ENCODE measurements at regions of chr2 and their contacts with region 1.

Region 1: DNA sequence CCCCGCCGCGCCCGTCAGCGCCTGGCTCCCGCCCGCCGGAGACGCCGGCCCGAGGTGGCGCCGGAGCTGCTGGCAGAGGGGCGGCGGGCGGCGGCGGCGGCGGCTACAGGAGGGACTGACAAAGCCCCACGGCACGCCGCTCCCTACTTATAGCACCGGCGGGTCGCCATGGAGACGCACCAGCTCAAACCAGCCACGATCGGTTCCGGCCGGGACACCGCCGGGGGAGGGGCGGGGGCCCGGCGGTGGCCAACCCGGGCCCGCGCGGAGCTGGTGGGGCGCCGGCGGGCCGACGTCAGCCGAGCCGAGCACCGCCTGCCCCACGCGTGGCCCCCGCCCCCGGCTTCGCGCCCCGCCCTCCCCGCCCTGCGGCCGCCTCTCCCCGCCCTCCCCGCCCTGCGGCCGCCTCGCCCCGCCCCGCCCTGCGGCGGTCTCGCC is at the start of gene ODC1:
- DNase-seq: peak; percentile 53
- ATAC-seq: peak; percentile 76
- H3K4me3 ChIP-seq: peak within 1 kb of the TSS; percentile 77
- H3K27ac ChIP-seq: peak within 1 kb of the TSS; percentile 93
- H3K4me1 ChIP-seq: peaks cover 25% of the 10 kb centered on the region
- H3K27me3 ChIP-seq: no peaks in the 10 kb centered on the region
- CTCF ChIP-seq: no peak
- EP300 ChIP-seq: no peak; a peak in 1 of 4 replicates
- POLR2A ChIP-seq: peak; percentile 87; the same call in 1 of the 2 replicates
- RAD21 ChIP-seq: no peak
- polyA plus RNA-seq, gene ODC1: 131 to 235 TPM

Region 2: GRCh38 chr2:9843229-9844035 is 604.8 kb before region 1 on chr2 and contains the start of gene TAF1B:
- CTCF ChIA-PET with region 1: no interaction called
- POLR2A ChIA-PET with region 1: interaction called, 10 read pairs
- RAD21 ChIA-PET with region 1: interaction called, 5 read pairs
- SMC1A ChIA-PET with region 1: no interaction called
- in situ Hi-C with region 1: no loop called
- intact Hi-C with region 1: no loop called
- DNase-seq: peak; percentile 72
- ATAC-seq: peak; percentile 93
- H3K4me3 ChIP-seq: peak within 1 kb of the TSS; percentile 70
- H3K27ac ChIP-seq: peak within 1 kb of the TSS; percentile 51
- H3K4me1 ChIP-seq: peaks cover 3% of the 10 kb centered on the region; the same call in 1 of the 2 replicates
- H3K27me3 ChIP-seq: no peaks in the 10 kb centered on the region
- CTCF ChIP-seq: peak; percentile 31 to 40 (median 37); a peak in 5 of 6 replicates
- EP300 ChIP-seq: no peak
- POLR2A ChIP-seq: peak; percentile 86
- RAD21 ChIP-seq: 0 out of 2 replicates have a peak, but pooled peaks have one; percentile 9
- polyA plus RNA-seq, gene TAF1B: 9.4 to 9.9 TPM

Region 3: DNA sequence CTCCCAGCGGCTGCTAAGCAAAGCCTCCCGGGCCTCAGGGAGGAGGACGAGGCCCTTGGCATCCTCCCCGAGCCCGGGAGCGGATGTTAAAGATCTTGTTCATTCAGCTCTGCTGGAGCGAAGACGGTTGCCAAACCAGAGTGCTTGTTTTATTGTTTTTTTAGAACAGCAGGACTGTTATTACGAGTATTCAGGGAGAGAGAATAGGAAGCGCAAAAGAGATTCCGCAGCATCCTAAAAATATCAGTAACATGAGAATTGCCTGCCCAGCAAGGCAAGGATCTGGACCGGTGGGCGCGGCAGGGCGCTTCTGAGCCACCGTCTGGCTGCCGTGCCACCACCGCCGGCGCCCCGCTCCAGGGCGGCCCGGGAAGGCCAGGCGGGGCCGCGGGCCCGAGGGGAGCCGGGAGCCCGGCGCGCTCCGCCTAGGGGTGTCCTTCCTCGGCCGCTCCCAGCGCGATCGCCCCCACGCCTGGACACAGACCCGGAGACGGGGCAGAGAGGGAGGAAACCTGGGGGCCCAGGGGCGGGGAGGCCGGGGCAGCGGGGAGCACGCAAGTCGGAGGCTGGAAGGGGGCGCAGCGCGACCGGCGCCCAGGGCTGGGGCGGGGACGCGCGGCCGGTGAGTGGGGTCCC is 368.9 kb before region 1 on chr2:
- CTCF ChIA-PET with region 1: interaction called, 3 read pairs
- POLR2A ChIA-PET with region 1: interaction called, 7 read pairs
- RAD21 ChIA-PET with region 1: interaction called, 7 read pairs
- SMC1A ChIA-PET with region 1: interaction called, 9 read pairs
- in situ Hi-C with region 1: no loop called
- intact Hi-C with region 1: loop called (anchors 1 kb)
- DNase-seq: no peak
- ATAC-seq: peak; percentile 28
- H3K4me3 ChIP-seq: peak overlapping the region; percentile 57
- H3K27ac ChIP-seq: peak overlapping the region; percentile 40; the same call in 1 of the 2 replicates
- H3K4me1 ChIP-seq: peaks cover 50% of the 10 kb centered on the region
- H3K27me3 ChIP-seq: no peaks in the 10 kb centered on the region
- CTCF ChIP-seq: no peak
- EP300 ChIP-seq: no peak
- POLR2A ChIP-seq: no peak
- RAD21 ChIP-seq: no peak

Region 4: DNA sequence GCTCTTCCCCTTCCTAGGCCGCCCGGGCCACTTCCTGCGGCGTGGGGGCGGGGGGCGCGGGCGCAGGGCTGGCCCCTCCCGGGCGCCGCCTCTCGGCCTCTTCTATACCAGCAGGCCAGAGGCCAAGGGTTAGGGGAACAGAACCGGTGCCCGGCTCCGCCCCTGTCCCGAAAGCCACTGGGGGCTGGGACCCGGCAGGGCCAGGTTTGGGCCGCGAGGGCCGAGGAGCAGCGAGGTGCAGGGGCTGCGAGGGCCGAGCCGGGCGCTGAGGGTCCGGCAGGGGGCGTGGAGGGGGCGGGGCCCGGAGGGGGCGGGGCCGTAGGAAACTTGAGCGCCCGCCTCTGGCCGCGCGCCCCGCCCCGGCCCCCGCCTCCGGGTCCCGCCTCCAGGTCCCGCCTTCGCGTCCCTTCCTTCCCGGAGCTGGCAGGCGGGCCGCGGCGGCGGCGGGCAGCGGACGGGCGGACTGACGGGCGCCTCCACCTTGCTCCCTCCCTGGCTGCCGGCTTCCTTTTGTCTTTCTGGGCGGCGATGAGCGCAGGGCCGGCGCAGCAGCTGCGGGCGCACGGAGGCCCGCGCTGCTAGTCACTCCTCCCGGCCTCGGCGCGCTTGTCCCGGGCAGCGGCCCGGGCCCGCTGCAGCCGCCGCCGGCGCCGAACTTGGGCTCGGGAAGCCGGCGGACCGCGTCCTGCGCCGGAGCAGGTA is 145.6 kb before region 1 on chr2 and contains the start of gene HPCAL1:
- CTCF ChIA-PET with region 1: interaction called, 6 read pairs
- POLR2A ChIA-PET with region 1: interaction called, 6 read pairs
- RAD21 ChIA-PET with region 1: interaction called, 12 read pairs
- SMC1A ChIA-PET with region 1: interaction called, 4 read pairs
- in situ Hi-C with region 1: no loop called
- intact Hi-C with region 1: no loop called
- DNase-seq: peak; percentile 40
- ATAC-seq: peak; percentile 86
- H3K4me3 ChIP-seq: peak within 1 kb of the TSS; percentile 69
- H3K27ac ChIP-seq: peak within 1 kb of the TSS; percentile 61
- H3K4me1 ChIP-seq: peaks cover 16% of the 10 kb centered on the region
- H3K27me3 ChIP-seq: no peaks in the 10 kb centered on the region; a peak in 1 of 4 replicates
- CTCF ChIP-seq: peak; percentile 41 to 52 (median 45); a peak in 5 of 6 replicates
- EP300 ChIP-seq: no peak
- POLR2A ChIP-seq: no peak
- RAD21 ChIP-seq: peak; percentile 19; the same call in 1 of the 2 replicates
- polyA plus RNA-seq, gene HPCAL1: 0.40 to 1.3 TPM

Region 5: GRCh38 chr2:10668402-10669012 is 220.3 kb after region 1 on chr2:
- CTCF ChIA-PET with region 1: interaction called, 4 read pairs
- POLR2A ChIA-PET with region 1: no interaction called
- RAD21 ChIA-PET with region 1: no interaction called
- SMC1A ChIA-PET with region 1: no interaction called
- in situ Hi-C with region 1: no loop called
- intact Hi-C with region 1: loop called (anchors 5 kb)
- DNase-seq: peak; percentile 27
- ATAC-seq: peak; percentile 76
- H3K4me3 ChIP-seq: no peak overlapping the region
- H3K27ac ChIP-seq: no peak overlapping the region
- H3K4me1 ChIP-seq: no peaks in the 10 kb centered on the region
- H3K27me3 ChIP-seq: no peaks in the 10 kb centered on the region
- CTCF ChIP-seq: peak; percentile 51 to 65 (median 62)
- EP300 ChIP-seq: no peak
- POLR2A ChIP-seq: no peak
- RAD21 ChIP-seq: peak; percentile 61

Region 6: DNA sequence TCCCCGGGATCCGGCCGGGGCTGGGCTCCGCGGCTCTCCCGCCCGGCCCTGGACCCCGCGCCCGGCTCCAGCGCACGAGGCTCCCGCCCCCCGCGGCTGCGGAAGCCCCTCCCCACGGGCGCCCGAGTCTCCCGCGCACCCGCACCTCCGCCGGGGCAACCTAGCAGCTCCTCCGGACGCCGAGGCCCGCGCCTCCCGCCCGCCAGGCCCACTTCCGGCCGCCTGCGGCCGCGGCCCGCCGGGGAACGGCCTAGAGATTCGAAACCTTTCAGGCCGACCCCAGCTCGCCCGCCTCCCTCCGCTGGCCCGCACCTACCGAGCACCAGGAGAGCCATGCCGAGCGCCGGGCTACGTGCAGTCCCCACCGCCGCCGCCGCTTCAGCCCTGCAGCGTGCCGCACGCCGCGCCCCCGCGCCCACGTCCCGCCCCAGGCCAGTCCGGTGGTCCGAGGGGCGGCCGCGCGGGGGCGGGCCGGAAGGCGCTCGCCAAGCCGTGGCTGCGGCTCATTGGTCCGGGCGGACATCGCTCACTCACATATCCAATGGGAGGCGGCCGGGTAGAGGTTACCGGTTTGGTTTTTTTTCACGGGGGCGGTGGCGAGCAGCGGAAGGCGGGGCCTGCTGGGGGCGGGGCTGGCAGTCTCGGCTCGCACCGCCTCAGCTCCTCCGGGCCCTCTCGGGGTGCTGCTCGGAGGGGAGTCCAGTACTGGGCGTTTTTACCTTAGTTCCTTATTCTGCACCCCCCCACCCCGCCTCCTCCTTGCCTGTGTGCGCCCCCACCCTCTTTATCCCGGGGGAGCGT is 364.3 kb after region 1 on chr2 and contains the start of gene PDIA6:
- CTCF ChIA-PET with region 1: no interaction called
- POLR2A ChIA-PET with region 1: no interaction called
- RAD21 ChIA-PET with region 1: interaction called, 4 read pairs
- SMC1A ChIA-PET with region 1: no interaction called
- in situ Hi-C with region 1: no loop called
- intact Hi-C with region 1: loop called (anchors 5 kb)
- DNase-seq: peak; percentile 81
- ATAC-seq: peak; percentile 94
- H3K4me3 ChIP-seq: peak within 1 kb of the TSS; percentile 90
- H3K27ac ChIP-seq: peak within 1 kb of the TSS; percentile 85
- H3K4me1 ChIP-seq: peaks cover 3% of the 10 kb centered on the region
- H3K27me3 ChIP-seq: no peaks in the 10 kb centered on the region; a peak in 2 of 4 replicates
- CTCF ChIP-seq: no peak
- EP300 ChIP-seq: no peak
- POLR2A ChIP-seq: peak; percentile 86
- RAD21 ChIP-seq: no peak
- polyA plus RNA-seq, gene PDIA6: 180 to 234 TPM

Measured in GM12878 (cell line).